ENCODE measurements at regions of chrX and their contacts with region 1.

Region 1: DNA sequence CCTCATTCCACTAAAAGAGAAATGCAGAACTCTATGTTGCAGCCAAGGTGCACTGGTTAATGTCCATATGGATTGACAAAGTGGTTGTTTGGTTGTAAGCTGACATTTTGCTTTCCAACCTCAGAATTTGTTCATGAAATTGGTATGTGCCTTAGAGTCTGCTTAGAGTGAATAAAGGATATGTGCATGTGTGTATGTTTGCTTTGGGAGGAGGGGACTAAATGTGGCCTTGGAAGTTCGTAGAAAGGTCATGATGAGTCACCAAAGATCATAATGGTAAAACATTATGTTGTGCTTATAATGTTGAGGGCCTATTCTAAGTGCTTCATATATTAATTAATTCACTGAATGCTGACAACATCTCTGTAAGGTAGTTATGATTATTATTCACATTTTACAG is 44.1 kb upstream of the MBNL3 start:
- DNase-seq: no peak
- H3K4me3 ChIP-seq: no peak overlapping the region
- H3K27ac ChIP-seq: no peak overlapping the region
- H3K4me1 ChIP-seq: no peaks in the 10 kb centered on the region
- H3K27me3 ChIP-seq: peaks cover 0 to 33% of the 10 kb centered on the region in 2 donors
- CTCF ChIP-seq: no peak
- POLR2A ChIP-seq: no peak

Region 2: DNA sequence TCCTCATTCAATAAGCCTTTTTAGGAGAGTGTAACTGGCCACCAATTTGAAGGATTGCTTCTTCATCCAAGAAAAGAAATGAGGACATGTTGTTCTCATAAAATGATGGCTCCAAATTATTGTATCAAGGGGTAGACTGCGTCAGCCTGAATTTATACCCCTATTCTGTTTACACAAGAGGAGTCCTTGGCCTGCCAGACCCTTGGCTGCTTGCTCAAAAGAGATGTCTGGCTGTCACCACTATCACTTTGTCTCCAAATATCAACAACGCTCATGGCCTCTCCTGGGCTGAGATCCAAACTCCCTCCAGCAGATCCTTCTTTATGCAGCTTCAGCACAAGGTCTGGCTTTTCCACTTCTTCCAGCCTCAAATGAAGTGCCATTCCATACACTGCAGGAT is 861.2 kb before region 1 on chrX:
- intact Hi-C with region 1: no loop called
- DNase-seq: no peak
- H3K4me3 ChIP-seq: no peak overlapping the region
- H3K27ac ChIP-seq: no peak overlapping the region
- H3K4me1 ChIP-seq: no peaks in the 10 kb centered on the region
- H3K27me3 ChIP-seq: peaks cover 0 to 28% of the 10 kb centered on the region in 2 donors
- CTCF ChIP-seq: no peak
- POLR2A ChIP-seq: no peak

Region 3: GRCh38 chrX:134459683-134460004 is 1926.7 kb after region 1 on chrX:
- intact Hi-C with region 1: loop called (anchors 10 kb)
- DNase-seq: no peak
- H3K4me3 ChIP-seq: peak overlapping the region; percentile 57 to 81 (median 73)
- H3K27ac ChIP-seq: peak overlapping the region; percentile 54 to 82
- H3K4me1 ChIP-seq: no peaks in the 10 kb centered on the region
- H3K27me3 ChIP-seq: peaks cover 0 to 16% of the 10 kb centered on the region in 2 donors
- CTCF ChIP-seq: no peak
- POLR2A ChIP-seq: no peak

Measured in breast epithelium (tissue), 4 donors.